A549 (cell line): ENCODE measurements at regions of chr12 and their contacts with region 1.

Region 1: GRCh38 chr12:106136263-106136662 is 2.5 kb downstream of the NUAK1 start:
- DNase-seq: peak; percentile 59 to 89
- ATAC-seq: peak; percentile 16 to 27; a peak in 3 of 6 replicates
- H3K4me3 ChIP-seq: peak overlapping the region; percentile 83
- H3K27ac ChIP-seq: peak overlapping the region; percentile 99
- H3K4me1 ChIP-seq: peaks cover 67% of the 10 kb centered on the region
- CTCF ChIP-seq: peak; percentile 95
- EP300 ChIP-seq: no peak
- POLR2A ChIP-seq: no peak
- RAD21 ChIP-seq: peak; percentile 99

Region 2: DNA sequence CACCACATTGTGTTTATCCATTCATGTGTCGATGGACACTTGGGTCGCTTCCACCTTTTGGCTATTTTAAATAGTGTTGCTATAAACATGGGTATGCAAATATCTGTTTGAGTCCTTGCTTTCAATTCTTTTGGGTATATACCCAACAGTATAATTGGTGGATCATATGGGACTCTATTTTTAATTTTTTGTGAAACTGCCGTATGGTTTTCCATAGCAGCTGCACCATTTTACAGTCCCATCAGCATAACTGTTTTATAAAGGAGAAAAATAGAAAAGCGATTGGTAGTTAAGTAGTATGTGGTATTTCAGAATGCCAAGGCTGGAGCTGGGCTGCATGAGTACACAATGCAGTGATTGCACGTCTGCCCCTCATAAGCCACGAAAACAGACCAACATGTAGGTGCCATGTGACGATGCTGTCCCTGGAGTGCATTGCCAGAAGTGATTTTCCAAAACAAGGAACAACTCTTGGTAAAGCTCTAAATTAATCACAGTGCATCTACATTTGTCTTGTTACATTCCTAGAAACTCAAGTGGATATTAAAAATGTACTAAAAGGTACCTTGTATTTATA is 722.3 kb before region 1 on chr12:
- CTCF ChIA-PET with region 1: interaction called, 135 read pairs
- POLR2A ChIA-PET with region 1: no interaction called
- DNase-seq: no peak
- ATAC-seq: no peak
- H3K4me3 ChIP-seq: no peak overlapping the region
- H3K27ac ChIP-seq: no peak overlapping the region
- H3K4me1 ChIP-seq: peaks cover 8% of the 10 kb centered on the region; the same call in 1 of the 3 replicates
- CTCF ChIP-seq: no peak
- EP300 ChIP-seq: no peak
- POLR2A ChIP-seq: no peak
- RAD21 ChIP-seq: no peak

Region 3: DNA sequence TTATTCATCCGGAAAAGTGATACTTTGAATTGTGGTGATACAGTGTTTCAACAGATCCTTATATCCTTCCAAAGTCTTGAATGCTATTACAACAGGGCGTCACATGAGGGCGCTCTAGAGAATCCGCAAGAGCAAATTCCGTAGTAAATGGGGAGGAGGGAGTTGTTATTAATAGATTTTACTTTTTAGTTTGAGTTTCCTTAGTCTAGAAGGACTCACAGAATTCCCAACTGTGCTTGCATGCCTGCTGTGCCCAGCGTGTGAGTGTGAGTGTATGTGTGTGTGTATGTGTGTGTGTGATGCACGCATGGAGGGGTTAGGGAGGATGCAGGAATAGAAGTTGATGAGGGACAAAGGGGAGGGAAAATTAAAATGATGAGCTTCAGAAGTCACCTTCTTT is 430.5 kb before region 1 on chr12:
- CTCF ChIA-PET with region 1: interaction called, 27 read pairs
- POLR2A ChIA-PET with region 1: no interaction called
- DNase-seq: peak; percentile 18 to 59
- ATAC-seq: peak in 1 of 2 experiments; percentile 67; a peak in 4 of 6 replicates
- H3K4me3 ChIP-seq: no peak overlapping the region
- H3K27ac ChIP-seq: no peak overlapping the region
- H3K4me1 ChIP-seq: no peaks in the 10 kb centered on the region
- CTCF ChIP-seq: peak; percentile 74
- EP300 ChIP-seq: no peak
- POLR2A ChIP-seq: no peak
- RAD21 ChIP-seq: peak; percentile 64 to 71

Region 4: DNA sequence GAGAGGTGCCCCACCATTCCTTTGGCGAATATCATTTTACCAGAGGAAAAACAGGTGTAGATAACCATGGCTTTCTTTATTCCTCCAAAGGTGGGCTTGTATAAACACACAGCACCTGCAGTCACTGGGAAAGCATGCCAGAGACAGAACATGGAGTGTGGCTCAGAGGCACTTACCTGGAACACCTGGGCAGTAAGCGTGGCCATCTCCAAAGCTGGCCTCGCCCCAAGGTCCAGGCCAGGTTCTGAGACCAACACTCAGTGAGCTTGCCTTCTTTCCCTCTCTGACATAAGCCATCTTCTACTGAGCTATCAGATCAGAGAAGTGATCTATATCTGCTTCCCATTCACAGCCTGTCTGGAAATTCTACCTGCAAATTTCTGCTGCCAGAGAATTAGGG is 68.0 kb before region 1 on chr12:
- CTCF ChIA-PET with region 1: interaction called, 10 read pairs
- POLR2A ChIA-PET with region 1: no interaction called
- DNase-seq: no peak
- ATAC-seq: no peak
- H3K4me3 ChIP-seq: no peak overlapping the region
- H3K27ac ChIP-seq: no peak overlapping the region
- H3K4me1 ChIP-seq: no peaks in the 10 kb centered on the region; the same call in 2 of the 3 replicates
- CTCF ChIP-seq: no peak
- EP300 ChIP-seq: no peak
- POLR2A ChIP-seq: no peak
- RAD21 ChIP-seq: no peak

Region 5: DNA sequence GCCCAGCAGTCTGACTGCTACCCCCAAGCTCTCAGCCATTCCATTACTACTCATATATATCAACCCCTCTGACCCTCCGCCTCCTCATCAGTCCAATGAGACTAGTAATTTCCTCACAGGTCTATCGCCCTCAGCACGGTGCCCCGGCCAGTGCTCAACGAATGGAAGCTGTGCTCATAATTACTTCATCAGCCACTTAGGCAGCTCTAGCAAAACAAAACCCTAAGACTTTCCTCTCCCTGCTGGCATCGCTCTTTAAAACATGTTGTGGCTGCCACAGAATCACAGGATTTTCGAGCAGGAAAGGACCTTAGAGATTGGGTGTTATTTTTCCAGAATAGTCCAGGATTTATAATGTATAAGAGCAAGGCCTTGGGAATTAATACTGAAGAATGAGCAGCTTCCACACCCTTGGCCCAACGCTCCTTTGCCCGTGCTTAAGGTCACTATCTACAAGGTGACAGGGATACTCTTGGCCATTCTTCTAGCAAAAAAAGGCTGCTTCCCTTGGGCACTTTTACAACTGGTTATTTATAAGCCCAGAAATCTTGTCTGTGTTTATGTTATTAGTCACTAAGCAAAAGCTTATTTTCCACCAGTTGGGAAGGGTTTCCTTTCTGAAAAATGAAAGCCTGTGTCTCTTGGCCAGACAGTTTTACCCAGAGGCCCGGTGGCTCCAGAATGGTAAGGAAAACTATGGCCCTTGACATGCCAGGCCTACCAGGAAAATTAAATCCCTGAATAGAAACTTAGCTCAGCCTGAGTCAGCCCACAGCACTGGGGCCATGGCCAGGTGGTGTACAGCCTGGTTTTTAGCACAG is 45.5 kb before region 1 on chr12:
- CTCF ChIA-PET with region 1: interaction called, 32 read pairs
- POLR2A ChIA-PET with region 1: interaction called, 3 read pairs
- DNase-seq: no peak
- ATAC-seq: peak; percentile 47 to 49; a peak in 4 of 6 replicates
- H3K4me3 ChIP-seq: no peak overlapping the region
- H3K27ac ChIP-seq: peak overlapping the region; percentile 88 to 90
- H3K4me1 ChIP-seq: peaks cover 75% of the 10 kb centered on the region
- CTCF ChIP-seq: no peak
- EP300 ChIP-seq: no peak
- POLR2A ChIP-seq: no peak
- RAD21 ChIP-seq: no peak

Region 6: GRCh38 chr12:106101803-106102202 is 34.5 kb before region 1 on chr12:
- CTCF ChIA-PET with region 1: interaction called, 43 read pairs
- POLR2A ChIA-PET with region 1: interaction called, 16 read pairs
- DNase-seq: no peak
- ATAC-seq: no peak
- H3K4me3 ChIP-seq: no peak overlapping the region
- H3K27ac ChIP-seq: peak overlapping the region in 1 of 2 experiments; percentile 46; a peak in 2 of 6 replicates
- H3K4me1 ChIP-seq: peaks cover 50% of the 10 kb centered on the region
- CTCF ChIP-seq: no peak
- EP300 ChIP-seq: no peak
- POLR2A ChIP-seq: no peak
- RAD21 ChIP-seq: no peak

Region 7: GRCh38 chr12:106123551-106124081 is 12.6 kb before region 1 on chr12:
- CTCF ChIA-PET with region 1: interaction called, 96 read pairs
- POLR2A ChIA-PET with region 1: interaction called, 11 read pairs
- DNase-seq: peak in 1 of 2 experiments; percentile 56
- ATAC-seq: peak in 1 of 2 experiments; percentile 4; a peak in 2 of 6 replicates
- H3K4me3 ChIP-seq: no peak overlapping the region
- H3K27ac ChIP-seq: peak overlapping the region; percentile 87 to 99
- H3K4me1 ChIP-seq: peaks cover 96% of the 10 kb centered on the region
- CTCF ChIP-seq: no peak
- EP300 ChIP-seq: no peak
- POLR2A ChIP-seq: no peak
- RAD21 ChIP-seq: no peak

Region 8: DNA sequence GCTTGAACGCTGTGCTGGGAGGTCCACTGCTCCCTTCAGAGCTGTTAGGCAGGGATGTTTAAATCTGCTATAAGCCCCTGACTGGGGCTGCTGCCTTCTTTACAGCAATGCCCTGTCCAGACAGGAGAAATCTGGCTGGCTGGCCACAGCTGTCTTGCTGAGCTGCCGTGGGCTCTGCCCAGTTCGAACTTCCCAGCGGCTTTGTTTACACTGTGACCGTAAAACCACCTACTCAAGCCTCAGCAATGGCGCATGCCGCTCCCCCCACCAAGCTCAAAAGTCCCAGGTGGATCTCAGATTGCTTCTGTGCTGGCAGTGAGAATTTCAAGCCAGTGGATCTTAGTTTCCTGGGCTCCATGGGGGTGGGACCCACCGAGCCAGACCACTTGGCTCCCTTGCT is 75.7 kb after region 1 on chr12:
- CTCF ChIA-PET with region 1: no interaction called
- POLR2A ChIA-PET with region 1: no interaction called
- DNase-seq: no peak
- ATAC-seq: no peak
- H3K4me3 ChIP-seq: no peak overlapping the region
- H3K27ac ChIP-seq: no peak overlapping the region
- H3K4me1 ChIP-seq: no peaks in the 10 kb centered on the region
- CTCF ChIP-seq: no peak
- EP300 ChIP-seq: no peak
- POLR2A ChIP-seq: no peak
- RAD21 ChIP-seq: no peak

Region 9: DNA sequence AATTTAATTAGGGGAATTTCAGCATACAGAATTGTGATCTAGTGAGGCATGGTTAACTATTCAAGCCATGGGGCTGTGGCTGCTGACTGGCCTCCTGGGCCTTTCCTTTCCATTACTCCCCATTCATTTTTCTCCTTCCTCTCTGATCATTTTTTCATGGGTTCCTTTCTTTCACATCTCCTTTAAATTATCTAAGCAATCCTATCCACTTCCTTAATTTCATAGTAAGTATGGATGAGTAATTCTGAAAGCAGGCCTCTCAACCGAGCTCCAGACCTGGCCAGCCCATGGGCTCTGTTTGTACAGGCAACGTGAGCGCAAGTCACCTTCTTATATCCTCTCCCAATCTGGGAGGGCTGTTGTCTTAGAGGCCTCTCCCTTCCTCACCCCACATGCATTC is 98.2 kb after region 1 on chr12:
- CTCF ChIA-PET with region 1: no interaction called
- POLR2A ChIA-PET with region 1: no interaction called
- DNase-seq: no peak
- ATAC-seq: no peak
- H3K4me3 ChIP-seq: no peak overlapping the region
- H3K27ac ChIP-seq: no peak overlapping the region
- H3K4me1 ChIP-seq: no peaks in the 10 kb centered on the region
- CTCF ChIP-seq: no peak
- EP300 ChIP-seq: no peak
- POLR2A ChIP-seq: no peak
- RAD21 ChIP-seq: no peak

Region 10: GRCh38 chr12:106682592-106683234 is 546.5 kb after region 1 on chr12:
- CTCF ChIA-PET with region 1: no interaction called
- POLR2A ChIA-PET with region 1: no interaction called
- DNase-seq: peak in 1 of 2 experiments; percentile 56
- ATAC-seq: peak; percentile 59 to 87; a peak in 3 of 6 replicates
- H3K4me3 ChIP-seq: no peak overlapping the region
- H3K27ac ChIP-seq: no peak overlapping the region
- H3K4me1 ChIP-seq: no peaks in the 10 kb centered on the region
- CTCF ChIP-seq: peak; percentile 28; the same call in 2 of the 3 replicates
- EP300 ChIP-seq: no peak
- POLR2A ChIP-seq: no peak
- RAD21 ChIP-seq: peak; percentile 29 to 53; a peak in 3 of 5 replicates